ENCODE measurements at regions of chr5 and their contacts with region 1.

Region 1: GRCh38 chr5:119411935-119412602 is 40.2 kb upstream of the HSD17B4 start:
- DNase-seq: peak; percentile 52
- H3K4me3 ChIP-seq: peak overlapping the region; percentile 60
- H3K27ac ChIP-seq: peak overlapping the region; percentile 71
- H3K27me3 ChIP-seq: no peaks in the 10 kb centered on the region
- CTCF ChIP-seq: peak; percentile 94

Region 2: GRCh38 chr5:118806571-118806970 is 605.5 kb before region 1 on chr5:
- CTCF ChIA-PET with region 1: no interaction called
- POLR2A ChIA-PET with region 1: no interaction called
- DNase-seq: no peak
- H3K4me3 ChIP-seq: no peak overlapping the region
- H3K27ac ChIP-seq: no peak overlapping the region
- H3K27me3 ChIP-seq: no peaks in the 10 kb centered on the region
- CTCF ChIP-seq: no peak

Region 3: GRCh38 chr5:118987988-118988865 is 423.8 kb before region 1 on chr5 and contains the start of gene DTWD2:
- CTCF ChIA-PET with region 1: interaction called, 228 read pairs
- POLR2A ChIA-PET with region 1: interaction called, 4 read pairs
- DNase-seq: peak; percentile 77
- H3K4me3 ChIP-seq: peak within 1 kb of the TSS; percentile 74
- H3K27ac ChIP-seq: no peak within 1 kb of the TSS
- H3K27me3 ChIP-seq: no peaks in the 10 kb centered on the region
- CTCF ChIP-seq: peak; percentile 82
- polyA plus RNA-seq, gene DTWD2: 1.5 and 1.9 TPM in 2 replicates

Region 4: DNA sequence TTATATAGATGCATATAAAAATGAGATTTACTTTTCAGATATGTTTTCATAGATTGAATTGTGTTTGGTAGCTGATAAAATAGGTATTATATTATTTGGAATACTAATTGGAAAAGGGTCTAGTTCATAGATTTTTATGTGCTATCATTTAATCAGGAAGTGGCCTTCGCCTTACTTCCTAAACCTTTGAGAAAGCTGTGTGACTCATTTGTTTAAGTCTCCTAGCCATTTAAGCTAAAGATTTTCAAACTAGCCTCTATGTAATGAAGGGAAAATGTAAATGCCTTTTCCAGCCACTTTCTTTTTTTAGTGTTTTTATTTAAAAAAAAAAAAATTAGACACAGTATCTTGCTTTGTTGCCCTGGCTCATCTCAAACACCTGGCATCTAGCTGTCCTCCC is 243.7 kb before region 1 on chr5:
- CTCF ChIA-PET with region 1: interaction called, 11 read pairs
- POLR2A ChIA-PET with region 1: no interaction called
- DNase-seq: no peak
- H3K4me3 ChIP-seq: no peak overlapping the region
- H3K27ac ChIP-seq: no peak overlapping the region
- H3K27me3 ChIP-seq: no peaks in the 10 kb centered on the region
- CTCF ChIP-seq: no peak

Region 5: DNA sequence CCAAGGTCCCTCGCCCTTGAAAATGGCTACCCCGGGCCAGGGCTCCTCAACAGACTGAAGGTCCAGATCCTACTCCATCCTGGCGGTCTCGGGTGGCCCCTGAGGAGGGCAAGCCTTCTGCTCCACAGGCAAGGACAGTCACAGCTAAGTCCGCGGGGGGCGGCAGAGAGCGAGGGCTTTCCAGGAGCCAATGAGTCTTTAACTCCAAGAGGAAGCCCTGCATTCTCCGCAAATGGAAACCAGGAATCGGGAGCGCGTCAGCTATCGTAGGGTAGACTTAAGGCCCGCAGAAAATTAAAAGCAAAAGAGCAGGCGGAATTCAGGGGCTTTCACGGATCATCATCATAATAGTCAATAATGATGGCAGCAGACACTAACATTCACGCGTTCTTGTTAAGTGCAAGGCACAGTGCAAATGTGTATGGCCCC is 144.1 kb before region 1 on chr5:
- CTCF ChIA-PET with region 1: interaction called, 22 read pairs
- POLR2A ChIA-PET with region 1: no interaction called
- DNase-seq: peak; percentile 90
- H3K4me3 ChIP-seq: peak overlapping the region; percentile 74
- H3K27ac ChIP-seq: peak overlapping the region; percentile 66
- H3K27me3 ChIP-seq: no peaks in the 10 kb centered on the region
- CTCF ChIP-seq: peak; percentile 74

Region 6: GRCh38 chr5:119332978-119333401 is 79.1 kb before region 1 on chr5:
- CTCF ChIA-PET with region 1: interaction called, 22 read pairs
- POLR2A ChIA-PET with region 1: interaction called, 4 read pairs
- DNase-seq: no peak
- H3K4me3 ChIP-seq: no peak overlapping the region
- H3K27ac ChIP-seq: no peak overlapping the region
- H3K27me3 ChIP-seq: no peaks in the 10 kb centered on the region
- CTCF ChIP-seq: no peak

Region 7: GRCh38 chr5:119435436-119436132 is 23.5 kb after region 1 on chr5:
- CTCF ChIA-PET with region 1: interaction called, 31 read pairs
- POLR2A ChIA-PET with region 1: no interaction called
- DNase-seq: peak; percentile 23
- H3K4me3 ChIP-seq: no peak overlapping the region
- H3K27ac ChIP-seq: no peak overlapping the region
- H3K27me3 ChIP-seq: peaks cover 2% of the 10 kb centered on the region
- CTCF ChIP-seq: peak; percentile 83

Region 8: DNA sequence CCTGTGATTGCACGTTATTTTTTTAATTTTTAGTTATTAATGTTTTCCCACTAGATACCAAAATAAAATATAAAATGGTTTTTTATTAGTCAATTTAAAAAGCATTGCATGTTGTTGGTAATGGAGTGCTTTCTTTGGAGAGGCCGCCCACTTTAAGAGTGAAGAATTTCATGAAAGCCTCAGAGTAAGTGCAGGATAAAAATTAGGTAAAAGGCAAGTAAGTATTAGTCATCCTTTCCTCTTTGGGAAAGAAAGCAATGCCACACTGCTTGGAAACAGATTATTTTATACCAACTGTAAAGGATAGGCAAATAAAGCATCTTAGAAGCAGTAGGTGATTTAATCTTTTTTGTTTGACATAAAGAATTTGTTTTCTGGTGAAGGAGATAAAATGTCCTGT is 103.1 kb after region 1 on chr5:
- CTCF ChIA-PET with region 1: no interaction called
- POLR2A ChIA-PET with region 1: no interaction called
- DNase-seq: no peak
- H3K4me3 ChIP-seq: no peak overlapping the region
- H3K27ac ChIP-seq: no peak overlapping the region
- H3K27me3 ChIP-seq: no peaks in the 10 kb centered on the region
- CTCF ChIP-seq: no peak

Region 9: GRCh38 chr5:119610470-119610869 is 198.4 kb after region 1 on chr5:
- CTCF ChIA-PET with region 1: no interaction called
- POLR2A ChIA-PET with region 1: no interaction called
- DNase-seq: no peak
- H3K4me3 ChIP-seq: no peak overlapping the region
- H3K27ac ChIP-seq: no peak overlapping the region
- H3K27me3 ChIP-seq: no peaks in the 10 kb centered on the region
- CTCF ChIP-seq: no peak